ENCODE measurements at regions of chr22 and their contacts with region 1.

Region 1: GRCh38 chr22:24270638-24271408 is at the start of gene SPECC1L:
- DNase-seq: peak; percentile 96
- H3K4me3 ChIP-seq: peak within 1 kb of the TSS; percentile 68 to 98 (median 85)
- H3K27ac ChIP-seq: peak within 1 kb of the TSS; percentile 70
- H3K4me1 ChIP-seq: peaks cover 12% of the 10 kb centered on the region
- H3K27me3 ChIP-seq: no peaks in the 10 kb centered on the region
- CTCF ChIP-seq: peak in 1 of 2 donors; percentile 6
- POLR2A ChIP-seq: peak; percentile 99
- total RNA-seq, gene SPECC1L: 63.2 and 79.3 TPM in 2 replicates

Region 2: DNA sequence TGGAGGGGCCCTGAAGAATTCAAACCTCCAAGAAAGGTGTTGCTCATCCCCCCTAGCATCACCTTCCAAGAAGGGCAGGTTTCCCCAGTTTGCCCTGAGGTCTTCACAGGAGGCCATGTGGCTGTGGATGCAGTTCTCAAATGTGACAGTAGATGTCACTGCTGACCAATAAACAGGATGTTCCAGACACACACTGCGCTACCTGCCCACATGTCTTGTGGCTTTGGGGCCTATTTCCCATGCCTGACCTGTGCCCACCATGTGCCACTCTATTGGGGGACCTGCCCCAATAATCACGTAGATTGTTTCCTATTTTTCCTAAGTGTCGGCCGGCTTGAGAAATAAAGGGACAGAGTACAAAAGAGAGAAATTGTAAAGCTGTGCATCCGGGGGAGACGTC is 286.4 kb before region 1 on chr22:
- CTCF ChIA-PET with region 1: no interaction called
- POLR2A ChIA-PET with region 1: no interaction called
- dilution Hi-C with region 1: no loop called
- intact Hi-C with region 1: no loop called
- DNase-seq: peak; percentile 34
- H3K4me3 ChIP-seq: no peak overlapping the region
- H3K27ac ChIP-seq: no peak overlapping the region
- H3K4me1 ChIP-seq: no peaks in the 10 kb centered on the region
- H3K27me3 ChIP-seq: no peaks in the 10 kb centered on the region
- CTCF ChIP-seq: peak; percentile 46
- POLR2A ChIP-seq: no peak

Region 3: DNA sequence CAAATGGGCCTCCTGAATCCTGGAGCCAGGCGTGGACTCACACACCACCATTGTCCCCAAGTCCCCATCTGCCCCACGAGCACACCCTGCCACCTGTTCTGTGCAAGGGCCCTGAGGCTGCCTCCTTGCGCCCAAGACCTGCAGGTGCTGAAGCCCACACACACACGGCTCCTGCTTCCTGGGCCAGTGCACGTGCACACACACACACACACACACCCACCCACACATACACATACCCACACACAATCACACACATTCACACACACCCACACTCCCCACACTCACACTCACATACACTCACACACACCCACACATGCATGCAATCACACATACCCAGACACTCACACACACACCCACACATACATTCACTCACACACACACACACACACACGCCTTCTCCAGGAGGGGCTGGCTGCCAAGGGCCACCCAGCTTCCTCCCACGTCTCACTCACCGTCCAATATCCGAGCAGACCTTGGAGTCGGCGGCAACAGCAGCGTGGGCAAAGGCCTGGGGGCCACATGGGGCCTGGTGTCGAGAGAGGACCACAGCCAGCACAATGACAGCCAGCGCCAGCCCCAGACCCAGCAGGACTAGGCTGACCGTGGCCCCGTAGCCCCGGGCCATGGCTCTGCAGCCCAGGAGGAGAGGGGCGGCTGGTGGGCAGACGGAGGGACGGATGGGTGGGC is 26.6 kb before region 1 on chr22:
- CTCF ChIA-PET with region 1: no interaction called
- POLR2A ChIA-PET with region 1: no interaction called
- dilution Hi-C with region 1: no loop called
- intact Hi-C with region 1: no loop called
- DNase-seq: peak; percentile 56
- H3K4me3 ChIP-seq: peak overlapping the region in 2 of 3 experiments; percentile 32 to 53
- H3K27ac ChIP-seq: peak overlapping the region; percentile 53
- H3K4me1 ChIP-seq: peaks cover 56% of the 10 kb centered on the region
- H3K27me3 ChIP-seq: no peaks in the 10 kb centered on the region
- CTCF ChIP-seq: no peak
- POLR2A ChIP-seq: no peak

Region 4: DNA sequence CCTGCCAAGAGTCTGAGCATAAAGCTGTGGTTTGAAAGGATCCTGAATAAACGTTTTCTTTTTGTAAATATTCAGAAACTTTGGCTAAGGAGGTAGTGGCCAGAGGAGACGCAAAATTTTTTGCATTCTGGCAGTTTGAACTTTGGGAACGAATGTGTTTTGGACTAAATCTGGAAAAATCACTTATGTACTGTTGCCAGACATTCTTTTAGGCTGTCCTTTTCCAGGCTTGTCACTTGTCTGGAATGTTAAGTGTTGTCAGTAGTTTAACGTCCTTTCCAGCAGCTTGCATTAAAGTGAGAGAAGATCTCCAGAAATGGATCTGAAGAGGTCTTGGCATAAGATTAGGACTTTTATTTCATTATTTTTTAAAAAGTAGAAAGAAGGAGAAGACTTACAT is 18.3 kb after region 1 on chr22:
- CTCF ChIA-PET with region 1: interaction called, 4 read pairs
- POLR2A ChIA-PET with region 1: no interaction called
- dilution Hi-C with region 1: no loop called
- intact Hi-C with region 1: loop called (anchors 2 kb)
- DNase-seq: peak; percentile 55
- H3K4me3 ChIP-seq: no peak overlapping the region
- H3K27ac ChIP-seq: peak overlapping the region; percentile 67
- H3K4me1 ChIP-seq: peaks cover 30% of the 10 kb centered on the region
- H3K27me3 ChIP-seq: no peaks in the 10 kb centered on the region
- CTCF ChIP-seq: no peak
- POLR2A ChIP-seq: no peak

Region 5: GRCh38 chr22:24305260-24305692 is 34.5 kb after region 1 on chr22:
- CTCF ChIA-PET with region 1: no interaction called
- POLR2A ChIA-PET with region 1: no interaction called
- dilution Hi-C with region 1: no loop called
- intact Hi-C with region 1: loop called (anchors 2 kb)
- DNase-seq: peak; percentile 89
- H3K4me3 ChIP-seq: peak overlapping the region in 1 of 3 experiments; percentile 28
- H3K27ac ChIP-seq: peak overlapping the region; percentile 89
- H3K4me1 ChIP-seq: peaks cover 39% of the 10 kb centered on the region
- H3K27me3 ChIP-seq: no peaks in the 10 kb centered on the region
- CTCF ChIP-seq: no peak
- POLR2A ChIP-seq: peak; percentile 44

Region 6: DNA sequence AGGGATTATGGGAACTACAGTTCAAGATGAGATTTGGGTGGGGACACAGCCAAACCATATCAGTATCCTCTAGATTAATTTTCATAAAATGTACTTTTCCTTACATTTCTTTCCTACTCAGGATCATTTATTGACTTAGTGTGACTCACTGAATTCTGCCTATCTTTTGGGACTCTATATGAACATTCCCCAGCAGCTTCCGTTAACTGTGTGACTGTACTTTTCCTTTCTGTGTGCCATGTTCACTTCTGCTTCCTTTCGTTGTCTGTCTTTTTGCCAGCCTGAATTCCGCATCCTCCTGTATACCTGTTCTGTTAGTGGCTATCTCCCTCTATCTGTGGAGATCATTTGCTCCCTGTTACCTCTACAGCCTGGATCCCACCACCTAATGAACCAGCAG is 48.6 kb after region 1 on chr22:
- CTCF ChIA-PET with region 1: interaction called, 3 read pairs
- POLR2A ChIA-PET with region 1: no interaction called
- dilution Hi-C with region 1: no loop called
- intact Hi-C with region 1: loop called (anchors 2 kb)
- DNase-seq: peak; percentile 89
- H3K4me3 ChIP-seq: peak overlapping the region in 1 of 3 experiments; percentile 39
- H3K27ac ChIP-seq: peak overlapping the region; percentile 88
- H3K4me1 ChIP-seq: peaks cover 44% of the 10 kb centered on the region
- H3K27me3 ChIP-seq: no peaks in the 10 kb centered on the region
- CTCF ChIP-seq: no peak
- POLR2A ChIP-seq: peak; percentile 26

Region 7: GRCh38 chr22:24525416-24526037 is 254.7 kb after region 1 on chr22:
- CTCF ChIA-PET with region 1: no interaction called
- POLR2A ChIA-PET with region 1: no interaction called
- dilution Hi-C with region 1: no loop called
- intact Hi-C with region 1: loop called (anchors 2 kb)
- DNase-seq: peak; percentile 72
- H3K4me3 ChIP-seq: no peak overlapping the region
- H3K27ac ChIP-seq: no peak overlapping the region
- H3K4me1 ChIP-seq: peaks cover 9% of the 10 kb centered on the region
- H3K27me3 ChIP-seq: no peaks in the 10 kb centered on the region
- CTCF ChIP-seq: peak; percentile 84 to 89
- POLR2A ChIP-seq: no peak